ENCODE measurements at regions of chr4 and their contacts with region 1.

Region 1: DNA sequence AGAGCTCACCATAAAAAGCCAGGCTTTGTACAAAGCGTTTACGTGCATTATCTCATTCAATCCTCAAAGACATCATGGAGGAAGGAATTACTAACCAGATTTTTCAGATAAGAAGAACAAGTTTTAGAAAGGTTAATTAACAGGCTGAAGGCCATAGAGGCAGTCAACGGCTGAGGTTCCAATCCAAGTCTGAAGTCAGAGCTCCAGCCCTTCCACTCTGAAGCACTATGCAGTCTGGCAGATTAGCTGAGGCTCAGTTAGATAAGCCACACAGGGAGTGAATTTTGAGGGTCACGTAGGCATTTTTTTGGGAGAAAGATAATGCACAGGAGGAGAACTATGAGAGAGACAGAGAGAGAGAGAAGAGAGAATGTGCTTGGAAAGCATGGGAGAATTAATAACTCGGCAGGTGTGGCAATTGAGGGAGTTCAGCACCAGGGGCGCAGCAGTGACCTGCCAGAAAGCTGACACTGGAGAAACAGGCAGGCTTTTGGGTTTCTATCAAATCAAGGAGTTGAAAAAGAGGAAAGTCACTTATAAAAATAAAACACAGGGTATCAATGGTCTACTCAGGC is 116.5 kb upstream of the NAP1L5 start:
- DNase-seq: no peak
- ATAC-seq: peak; percentile 76
- H3K4me3 ChIP-seq: no peak overlapping the region
- H3K27ac ChIP-seq: no peak overlapping the region
- H3K4me1 ChIP-seq: peaks cover 97% of the 10 kb centered on the region
- H3K27me3 ChIP-seq: no peaks in the 10 kb centered on the region
- CTCF ChIP-seq: peak; percentile 15; the same call in 1 of the 2 replicates
- EP300 ChIP-seq: no peak
- POLR2A ChIP-seq: no peak
- RAD21 ChIP-seq: no peak

Region 2: GRCh38 chr4:88533937-88534750 is 280.0 kb before region 1 on chr4:
- CTCF ChIA-PET with region 1: no interaction called
- POLR2A ChIA-PET with region 1: no interaction called
- in situ Hi-C with region 1: loop called (anchors 25 kb)
- intact Hi-C with region 1: loop called (anchors 5 kb)
- DNase-seq: no peak
- ATAC-seq: no peak
- H3K4me3 ChIP-seq: no peak overlapping the region
- H3K27ac ChIP-seq: no peak overlapping the region
- H3K4me1 ChIP-seq: peaks cover 4% of the 10 kb centered on the region; the same call in 1 of the 2 replicates
- H3K27me3 ChIP-seq: no peaks in the 10 kb centered on the region
- CTCF ChIP-seq: no peak
- EP300 ChIP-seq: no peak
- POLR2A ChIP-seq: no peak
- RAD21 ChIP-seq: no peak

Region 3: DNA sequence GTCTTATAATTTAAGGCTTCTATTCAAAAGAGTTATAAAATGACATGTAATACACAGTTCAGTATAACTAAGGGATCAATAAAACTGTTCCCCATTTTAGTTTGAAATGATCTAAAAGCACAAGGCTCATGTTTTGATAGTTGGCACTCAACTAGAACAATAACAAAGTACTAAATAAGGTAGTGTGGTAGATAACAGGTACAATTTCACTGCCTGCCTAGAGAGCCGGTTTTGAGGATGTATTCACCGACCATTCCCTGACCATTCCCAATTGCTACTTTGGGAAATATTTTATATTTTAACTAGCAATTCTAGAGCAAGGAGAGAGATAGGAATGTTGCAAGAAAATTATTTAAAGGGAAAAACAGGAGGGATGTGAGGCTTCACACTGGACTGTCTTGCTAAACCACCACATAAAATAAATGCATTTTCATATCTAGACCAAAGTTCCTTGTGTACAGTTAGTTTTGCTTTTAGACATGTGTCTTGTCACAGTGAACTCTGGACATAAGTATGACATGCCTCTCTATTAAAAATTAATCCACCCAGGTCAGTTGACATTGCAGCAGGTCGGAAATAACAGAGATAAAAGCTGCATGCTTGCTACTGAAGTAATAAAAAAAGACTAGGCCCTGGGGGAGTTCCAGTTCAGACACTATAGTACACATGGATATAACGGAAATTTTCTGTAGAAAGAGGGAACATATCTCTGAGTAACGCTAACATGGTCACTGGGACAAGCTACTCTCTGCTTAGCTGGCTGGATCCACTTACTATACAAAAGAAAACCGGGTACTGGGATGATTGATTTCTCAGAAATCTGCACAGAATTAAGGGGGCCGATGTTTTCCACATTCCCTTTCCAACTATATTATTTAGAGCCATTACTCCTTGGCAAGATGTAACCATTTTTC is 60.2 kb before region 1 on chr4:
- CTCF ChIA-PET with region 1: no interaction called
- POLR2A ChIA-PET with region 1: interaction called, 9 read pairs
- in situ Hi-C with region 1: loop called (anchors 5 kb)
- intact Hi-C with region 1: loop called (anchors 5 kb)
- DNase-seq: peak; percentile 94
- ATAC-seq: peak; percentile 90
- H3K4me3 ChIP-seq: peak overlapping the region in 1 of 3 experiments; percentile 25; a peak in 1 of 6 replicates
- H3K27ac ChIP-seq: peak overlapping the region; percentile 84
- H3K4me1 ChIP-seq: peaks cover 71% of the 10 kb centered on the region
- H3K27me3 ChIP-seq: no peaks in the 10 kb centered on the region
- CTCF ChIP-seq: no peak
- EP300 ChIP-seq: peak in 1 of 2 experiments; percentile 83; a peak in 3 of 4 replicates
- POLR2A ChIP-seq: peak; percentile 28 to 35; a peak in 2 of 4 replicates
- RAD21 ChIP-seq: no peak

Region 4: DNA sequence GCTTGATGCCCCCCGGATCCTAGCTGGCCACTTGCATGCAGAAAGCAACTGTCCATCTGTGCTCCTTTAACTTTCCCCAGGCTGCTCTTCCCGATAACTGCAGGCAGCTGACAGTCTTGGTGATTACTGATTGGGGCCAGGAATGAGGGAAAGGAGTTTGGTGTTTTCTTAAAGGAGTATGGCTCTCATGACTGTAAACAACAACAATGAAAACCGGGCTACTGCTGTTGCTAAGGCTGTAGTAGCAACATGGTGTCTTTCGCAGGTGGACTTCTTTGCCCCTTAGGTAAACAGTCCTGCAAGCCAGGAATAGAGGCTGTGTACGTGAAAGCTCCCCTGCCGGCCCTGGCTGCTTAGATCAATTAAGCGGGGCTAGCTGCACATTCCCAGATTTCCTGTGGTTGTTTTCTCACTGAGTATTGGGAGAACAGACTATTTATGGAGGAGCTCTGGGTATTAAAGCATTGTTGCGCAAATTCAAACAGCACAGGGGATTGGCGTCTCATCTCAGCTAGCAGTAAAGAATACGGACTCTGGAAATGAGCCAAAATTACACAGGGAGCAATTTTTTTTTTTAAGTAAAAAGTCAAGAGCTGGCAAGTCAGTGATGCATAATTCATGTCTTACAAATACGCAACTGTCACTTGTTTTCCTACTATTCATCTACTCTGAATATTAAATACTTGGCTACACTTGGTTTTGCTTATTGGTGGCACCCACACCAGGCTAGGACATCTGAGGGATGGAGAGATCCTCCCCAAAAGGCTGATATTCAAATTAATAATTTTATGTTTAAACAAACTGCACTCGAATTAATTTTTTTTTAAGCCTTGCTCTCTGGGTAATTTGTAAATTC is 54.9 kb before region 1 on chr4:
- CTCF ChIA-PET with region 1: no interaction called
- POLR2A ChIA-PET with region 1: interaction called, 3 read pairs
- in situ Hi-C with region 1: loop called (anchors 5 kb)
- intact Hi-C with region 1: loop called (anchors 5 kb)
- DNase-seq: peak; percentile 55
- ATAC-seq: peak; percentile 79
- H3K4me3 ChIP-seq: peak overlapping the region; percentile 24 to 49 (median 32); a peak in 5 of 6 replicates
- H3K27ac ChIP-seq: peak overlapping the region; percentile 46
- H3K4me1 ChIP-seq: peaks cover 97% of the 10 kb centered on the region
- H3K27me3 ChIP-seq: no peaks in the 10 kb centered on the region
- CTCF ChIP-seq: no peak
- EP300 ChIP-seq: peak in 1 of 2 experiments; percentile 18; a peak in 1 of 4 replicates
- POLR2A ChIP-seq: no peak
- RAD21 ChIP-seq: no peak

Region 5: GRCh38 chr4:88866862-88867550 is 52.9 kb after region 1 on chr4:
- CTCF ChIA-PET with region 1: no interaction called
- POLR2A ChIA-PET with region 1: no interaction called
- in situ Hi-C with region 1: no loop called
- intact Hi-C with region 1: no loop called
- DNase-seq: no peak
- ATAC-seq: no peak
- H3K4me3 ChIP-seq: no peak overlapping the region
- H3K27ac ChIP-seq: no peak overlapping the region
- H3K4me1 ChIP-seq: peaks cover 11% of the 10 kb centered on the region
- H3K27me3 ChIP-seq: no peaks in the 10 kb centered on the region
- CTCF ChIP-seq: no peak
- EP300 ChIP-seq: no peak
- POLR2A ChIP-seq: no peak
- RAD21 ChIP-seq: no peak